ENCODE measurements at regions of chr9 and their contacts with region 1.

Region 1: DNA sequence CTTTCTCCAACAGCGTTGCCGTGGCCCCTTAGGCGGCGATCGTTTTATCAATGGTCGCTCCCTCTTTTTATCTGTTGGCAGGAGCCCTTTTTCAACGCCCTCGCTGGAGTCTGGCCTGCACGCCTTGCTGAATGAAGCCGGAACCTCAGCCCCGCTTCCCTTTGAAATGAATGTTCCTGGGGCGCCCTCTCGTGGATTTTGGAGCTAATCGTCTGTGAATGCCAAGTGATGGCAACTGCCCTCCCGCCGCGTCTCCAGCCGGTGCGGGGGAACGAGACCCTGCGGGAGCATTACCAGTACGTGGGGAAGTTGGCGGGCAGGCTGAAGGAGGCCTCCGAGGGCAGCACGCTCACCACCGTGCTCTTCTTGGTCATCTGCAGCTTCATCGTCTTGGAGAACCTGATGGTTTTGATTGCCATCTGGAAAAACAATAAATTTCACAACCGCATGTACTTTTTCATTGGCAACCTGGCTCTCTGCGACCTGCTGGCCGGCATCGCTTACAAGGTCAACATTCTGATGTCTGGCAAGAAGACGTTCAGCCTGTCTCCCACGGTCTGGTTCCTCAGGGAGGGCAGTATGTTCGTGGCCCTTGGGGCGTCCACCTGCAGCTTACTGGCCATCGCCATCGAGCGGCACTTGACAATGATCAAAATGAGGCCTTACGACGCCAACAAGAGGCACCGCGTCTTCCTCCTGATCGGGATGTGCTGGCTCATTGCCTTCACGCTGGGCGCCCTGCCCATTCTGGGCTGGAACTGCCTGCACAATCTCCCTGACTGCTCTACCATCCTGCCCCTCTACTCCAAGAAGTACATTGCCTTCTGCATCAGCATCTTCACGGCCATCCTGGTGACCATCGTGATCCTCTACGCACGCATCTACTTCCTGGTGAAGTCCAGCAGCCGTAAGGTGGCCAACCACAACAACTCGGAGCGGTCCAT is 10.0 kb downstream of the S1PR3 start:
- DNase-seq: peak; percentile 66
- ATAC-seq: peak; percentile 95
- H3K4me3 ChIP-seq: 0 out of 4 replicates have a peak overlapping the region, but pooled peaks of 1 of the 2 experiments have one; percentile 7
- H3K27ac ChIP-seq: no peak overlapping the region
- H3K4me1 ChIP-seq: peaks cover 0 to 8% of the 10 kb centered on the region in 2 experiments; a peak in 1 of 4 replicates
- H3K27me3 ChIP-seq: peaks cover 12% of the 10 kb centered on the region
- CTCF ChIP-seq: peak; percentile 68 to 84 (median 80)
- POLR2A ChIP-seq: no peak
- RAD21 ChIP-seq: peak; percentile 93

Region 2: DNA sequence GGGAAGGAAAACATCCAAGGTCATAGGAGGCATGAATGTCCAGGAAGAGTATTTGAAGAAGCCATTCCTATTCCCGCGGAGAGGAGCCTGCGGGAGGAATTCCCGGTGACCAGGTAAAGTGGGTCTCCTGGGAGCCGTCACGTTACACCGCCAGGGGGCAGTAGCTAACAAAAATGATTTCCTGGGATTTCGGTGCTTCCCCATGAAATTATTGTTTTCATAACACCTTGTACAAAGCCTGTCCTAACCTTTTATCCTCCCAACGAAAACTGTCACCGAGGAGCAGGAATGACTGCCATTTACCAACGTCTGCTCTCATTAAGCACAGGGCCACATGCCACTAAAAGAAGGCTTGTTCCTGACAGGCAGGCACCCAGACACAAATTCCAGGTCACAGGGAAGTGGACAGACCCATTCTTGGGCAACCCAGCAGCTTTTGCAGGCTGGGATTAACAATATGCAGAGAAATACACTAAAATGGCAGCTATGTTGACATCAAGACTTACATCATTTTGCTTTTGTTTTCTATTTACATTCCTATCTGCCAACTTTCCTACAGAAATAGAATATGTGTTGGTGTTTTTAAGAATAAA is 1316.5 kb before region 1 on chr9:
- CTCF ChIA-PET with region 1: interaction called, 3 read pairs
- POLR2A ChIA-PET with region 1: no interaction called
- RAD21 ChIA-PET with region 1: no interaction called
- intact Hi-C with region 1: loop called (anchors 10 kb)
- DNase-seq: peak; percentile 15
- ATAC-seq: peak; percentile 90
- H3K4me3 ChIP-seq: no peak overlapping the region
- H3K27ac ChIP-seq: no peak overlapping the region
- H3K4me1 ChIP-seq: peaks cover 0 to 4% of the 10 kb centered on the region in 2 experiments; a peak in 1 of 4 replicates
- H3K27me3 ChIP-seq: no peaks in the 10 kb centered on the region
- CTCF ChIP-seq: peak; percentile 72 to 86 (median 75); a peak in 5 of 6 replicates
- POLR2A ChIP-seq: no peak
- RAD21 ChIP-seq: peak; percentile 88

Region 3: GRCh38 chr9:88173378-88173999 is 827.8 kb before region 1 on chr9:
- CTCF ChIA-PET with region 1: no interaction called
- POLR2A ChIA-PET with region 1: no interaction called
- RAD21 ChIA-PET with region 1: no interaction called
- intact Hi-C with region 1: loop called (anchors 10 kb)
- DNase-seq: peak; percentile 81
- ATAC-seq: peak; percentile 91
- H3K4me3 ChIP-seq: no peak overlapping the region
- H3K27ac ChIP-seq: no peak overlapping the region
- H3K4me1 ChIP-seq: no peaks in the 10 kb centered on the region
- H3K27me3 ChIP-seq: no peaks in the 10 kb centered on the region
- CTCF ChIP-seq: peak; percentile 85 to 100 (median 92)
- POLR2A ChIP-seq: no peak
- RAD21 ChIP-seq: peak; percentile 93

Region 4: DNA sequence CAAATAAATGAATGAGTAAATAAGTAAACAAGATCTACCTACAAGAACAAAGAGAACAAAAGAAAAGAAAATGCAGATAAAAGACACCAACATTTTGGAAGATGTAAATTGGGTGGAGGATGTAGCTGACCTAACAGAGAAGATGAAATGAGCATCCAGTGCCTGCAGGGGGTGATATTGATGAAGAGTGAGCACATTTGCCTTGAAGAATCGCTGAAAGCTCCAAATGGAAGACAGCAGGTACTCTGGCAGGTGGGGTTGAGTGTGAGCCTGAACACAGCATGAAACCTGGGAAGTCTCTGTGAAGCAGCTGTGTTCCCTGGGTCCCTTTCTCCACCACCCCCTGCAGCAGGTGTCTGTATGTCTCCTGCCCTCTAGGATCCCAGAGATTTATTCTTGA is 340.6 kb before region 1 on chr9:
- CTCF ChIA-PET with region 1: interaction called, 10 read pairs
- POLR2A ChIA-PET with region 1: no interaction called
- RAD21 ChIA-PET with region 1: interaction called in 1 of 2 experiments, 3 read pairs
- intact Hi-C with region 1: loop called (anchors 5 kb)
- DNase-seq: peak; percentile 12
- ATAC-seq: peak; percentile 79
- H3K4me3 ChIP-seq: no peak overlapping the region
- H3K27ac ChIP-seq: no peak overlapping the region
- H3K4me1 ChIP-seq: no peaks in the 10 kb centered on the region
- H3K27me3 ChIP-seq: no peaks in the 10 kb centered on the region
- CTCF ChIP-seq: peak; percentile 27 to 54 (median 53); a peak in 5 of 6 replicates
- POLR2A ChIP-seq: no peak
- RAD21 ChIP-seq: peak; percentile 35

Region 5: GRCh38 chr9:88889386-88889785 is 111.9 kb before region 1 on chr9:
- CTCF ChIA-PET with region 1: no interaction called
- POLR2A ChIA-PET with region 1: no interaction called
- RAD21 ChIA-PET with region 1: no interaction called
- intact Hi-C with region 1: loop called (anchors 5 kb)
- DNase-seq: no peak
- ATAC-seq: no peak
- H3K4me3 ChIP-seq: no peak overlapping the region
- H3K27ac ChIP-seq: no peak overlapping the region
- H3K4me1 ChIP-seq: no peaks in the 10 kb centered on the region
- H3K27me3 ChIP-seq: no peaks in the 10 kb centered on the region
- CTCF ChIP-seq: no peak
- POLR2A ChIP-seq: no peak
- RAD21 ChIP-seq: no peak